ENCODE measurements at regions of chr3 and their contacts with region 1.

Region 1: GRCh38 chr3:32816439-32817256 is 1.1 kb upstream of the TRIM71 start:
- DNase-seq: peak; percentile 50
- ATAC-seq: peak; percentile 23
- H3K4me3 Mint-ChIP-seq: peak overlapping the region; percentile 62
- H3K27ac Mint-ChIP-seq: no peak overlapping the region
- H3K4me1 Mint-ChIP-seq: peaks cover 26% of the 10 kb centered on the region
- H3K27me3 Mint-ChIP-seq: peaks cover 39% of the 10 kb centered on the region

Region 2: GRCh38 chr3:32781210-32781968 is 35.3 kb before region 1 on chr3:
- CTCF ChIA-PET with region 1: no interaction called
- POLR2A ChIA-PET with region 1: no interaction called
- intact Hi-C with region 1: loop called in 1 of 2 experiments (anchors 1 kb)
- DNase-seq: peak; percentile 84
- ATAC-seq: peak; percentile 86
- H3K4me3 Mint-ChIP-seq: peak overlapping the region; percentile 79
- H3K27ac Mint-ChIP-seq: no peak overlapping the region
- H3K4me1 Mint-ChIP-seq: peaks cover 10% of the 10 kb centered on the region
- H3K27me3 Mint-ChIP-seq: peaks cover 12% of the 10 kb centered on the region

Region 3: DNA sequence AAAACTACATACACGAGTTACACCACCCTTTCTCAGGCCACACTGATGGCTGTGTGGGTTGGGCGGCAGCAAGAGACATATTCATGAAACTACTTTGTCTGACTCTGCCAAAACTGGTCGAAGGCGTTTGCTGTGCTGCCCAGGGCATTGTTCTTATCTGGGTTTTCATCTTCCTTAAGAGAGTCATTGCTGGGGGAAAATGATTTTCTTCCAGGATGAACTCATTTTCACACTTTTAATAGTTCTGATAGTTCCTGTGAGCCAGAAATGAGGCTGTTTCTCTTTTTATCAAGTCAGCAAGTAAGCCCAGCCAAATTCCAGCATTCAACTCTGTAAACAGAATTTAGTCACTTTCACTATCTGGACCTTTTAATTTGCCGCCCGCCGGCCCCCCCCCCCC is 48.8 kb after region 1 on chr3:
- CTCF ChIA-PET with region 1: no interaction called
- POLR2A ChIA-PET with region 1: no interaction called
- intact Hi-C with region 1: no loop called
- DNase-seq: no peak
- ATAC-seq: peak; percentile 39
- H3K4me3 Mint-ChIP-seq: no peak overlapping the region
- H3K27ac Mint-ChIP-seq: no peak overlapping the region
- H3K4me1 Mint-ChIP-seq: peaks cover 2% of the 10 kb centered on the region
- H3K27me3 Mint-ChIP-seq: no peaks in the 10 kb centered on the region

Region 4: GRCh38 chr3:32934150-32934742 is 117.6 kb after region 1 on chr3:
- CTCF ChIA-PET with region 1: no interaction called
- POLR2A ChIA-PET with region 1: no interaction called
- intact Hi-C with region 1: loop called in 1 of 2 experiments (anchors 10 kb)
- DNase-seq: peak; percentile 48
- ATAC-seq: no peak
- H3K4me3 Mint-ChIP-seq: no peak overlapping the region
- H3K27ac Mint-ChIP-seq: no peak overlapping the region
- H3K4me1 Mint-ChIP-seq: no peaks in the 10 kb centered on the region
- H3K27me3 Mint-ChIP-seq: no peaks in the 10 kb centered on the region

Region 5: GRCh38 chr3:33096093-33096868 is 279.6 kb after region 1 on chr3:
- CTCF ChIA-PET with region 1: no interaction called
- POLR2A ChIA-PET with region 1: no interaction called
- intact Hi-C with region 1: loop called in 1 of 2 experiments (anchors 10 kb)
- DNase-seq: peak; percentile 66
- ATAC-seq: peak; percentile 46
- H3K4me3 Mint-ChIP-seq: peak overlapping the region; percentile 99
- H3K27ac Mint-ChIP-seq: peak overlapping the region; percentile 92
- H3K4me1 Mint-ChIP-seq: peaks cover 40% of the 10 kb centered on the region
- H3K27me3 Mint-ChIP-seq: no peaks in the 10 kb centered on the region

Region 6: DNA sequence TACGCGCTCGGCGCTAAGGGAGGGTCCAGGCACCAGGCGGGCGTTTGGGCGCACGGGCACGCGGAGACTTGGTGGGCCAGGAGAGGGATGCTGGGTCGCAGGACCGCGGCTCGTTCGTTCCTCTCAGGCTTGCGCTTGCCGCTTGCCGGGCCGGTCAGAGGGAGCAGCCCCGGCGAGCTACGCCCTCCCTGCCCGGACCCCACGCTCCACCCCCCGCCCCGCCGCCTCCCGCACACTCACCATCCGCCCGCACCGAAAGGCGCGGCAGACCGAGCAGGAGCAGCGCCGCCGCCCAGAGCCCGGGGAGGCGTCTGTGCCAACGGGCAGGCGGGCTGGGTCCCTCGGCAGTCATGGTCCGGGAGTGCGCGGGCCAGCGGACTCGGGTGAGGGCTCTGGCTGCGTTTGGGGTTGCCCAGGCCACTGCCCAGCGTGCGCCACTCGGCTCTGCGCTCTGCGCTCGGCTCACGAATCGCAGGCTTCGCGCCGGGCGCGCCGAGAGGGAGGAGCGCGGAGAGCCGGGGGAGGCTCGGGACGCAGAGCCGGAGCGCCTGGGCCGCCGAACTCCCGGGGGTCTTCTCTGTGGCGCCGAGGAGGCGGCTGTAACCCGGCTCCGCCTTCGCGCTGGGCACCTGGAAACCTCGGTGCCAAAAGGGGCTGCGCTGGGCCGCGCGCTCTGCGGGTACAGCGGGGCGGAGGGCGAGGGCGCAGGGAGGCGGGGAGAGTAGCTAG is 402.0 kb after region 1 on chr3 and contains the start of gene SUSD5:
- CTCF ChIA-PET with region 1: no interaction called
- POLR2A ChIA-PET with region 1: no interaction called
- intact Hi-C with region 1: loop called in 1 of 2 experiments (anchors 5 kb)
- DNase-seq: peak; percentile 18
- ATAC-seq: no peak
- H3K4me3 Mint-ChIP-seq: no peak within 1 kb of the TSS
- H3K27ac Mint-ChIP-seq: no peak within 1 kb of the TSS
- H3K4me1 Mint-ChIP-seq: peaks cover 5% of the 10 kb centered on the region
- H3K27me3 Mint-ChIP-seq: peaks cover 48% of the 10 kb centered on the region
- total RNA-seq, gene SUSD5: not detected

Measured in activated CD4-positive, alpha-beta T cell treated with anti-CD3 and anti-CD28 coated beads for 36 hours (primary cell).